Ovary (tissue), 10 donors: ENCODE measurements at regions of chr12 and their contacts with region 1.

Region 1: GRCh38 chr12:56521590-56522371 is at the start of gene RBMS2:
- DNase-seq: peak; percentile 81 to 92 (median 84)
- H3K4me3 ChIP-seq: peak within 1 kb of the TSS; percentile 50
- H3K27ac ChIP-seq: peak within 1 kb of the TSS; percentile 54 to 84
- H3K4me1 ChIP-seq: peaks cover 5% of the 10 kb centered on the region
- H3K27me3 ChIP-seq: no peaks in the 10 kb centered on the region
- CTCF ChIP-seq: no peak
- EP300 ChIP-seq: no peak
- POLR2A ChIP-seq: peak; percentile 15
- total RNA-seq, gene RBMS2: 15.0 to 44.4 (median 36.6) TPM

Region 2: GRCh38 chr12:56571126-56571525 is 49.3 kb after region 1 on chr12:
- intact Hi-C with region 1: loop called in 2 of 4 experiments (anchors 2 to 5 kb)
- DNase-seq: no peak
- H3K4me3 ChIP-seq: no peak overlapping the region
- H3K27ac ChIP-seq: no peak overlapping the region
- H3K4me1 ChIP-seq: no peaks in the 10 kb centered on the region
- H3K27me3 ChIP-seq: no peaks in the 10 kb centered on the region
- CTCF ChIP-seq: no peak
- EP300 ChIP-seq: no peak
- POLR2A ChIP-seq: no peak

Region 3: GRCh38 chr12:56630160-56630632 is 108.4 kb after region 1 on chr12 and contains the start of gene BAZ2A:
- intact Hi-C with region 1: loop called in 3 of 4 experiments (anchors 5 kb)
- DNase-seq: peak; percentile 79 to 90 (median 87)
- H3K4me3 ChIP-seq: peak within 1 kb of the TSS; percentile 81
- H3K27ac ChIP-seq: peak within 1 kb of the TSS; percentile 85 to 98
- H3K4me1 ChIP-seq: peaks cover 20% of the 10 kb centered on the region
- H3K27me3 ChIP-seq: no peaks in the 10 kb centered on the region
- CTCF ChIP-seq: no peak
- EP300 ChIP-seq: no peak
- POLR2A ChIP-seq: peak; percentile 32
- total RNA-seq, gene BAZ2A: 49.4 to 105 (median 77.5) TPM